ENCODE measurements at regions of chr3 and their contacts with region 1.

Region 1: GRCh38 chr3:152094406-152094805 is 174.3 kb upstream of the MBNL1 start:
- DNase-seq: no peak
- H3K4me3 ChIP-seq: no peak overlapping the region
- CTCF ChIP-seq: no peak

Region 2: GRCh38 chr3:152127058-152127457 is 32.7 kb after region 1 on chr3:
- in situ Hi-C with region 1: no loop called
- DNase-seq: no peak
- H3K4me3 ChIP-seq: no peak overlapping the region
- CTCF ChIP-seq: no peak

Region 3: GRCh38 chr3:152139651-152140050 is 45.2 kb after region 1 on chr3:
- in situ Hi-C with region 1: loop called (anchors 5 kb)
- DNase-seq: no peak
- H3K4me3 ChIP-seq: no peak overlapping the region
- CTCF ChIP-seq: no peak